Gastrocnemius medialis (tissue), 4 donors: ENCODE measurements at regions of chr9 and their contacts with region 1.

Region 1: DNA sequence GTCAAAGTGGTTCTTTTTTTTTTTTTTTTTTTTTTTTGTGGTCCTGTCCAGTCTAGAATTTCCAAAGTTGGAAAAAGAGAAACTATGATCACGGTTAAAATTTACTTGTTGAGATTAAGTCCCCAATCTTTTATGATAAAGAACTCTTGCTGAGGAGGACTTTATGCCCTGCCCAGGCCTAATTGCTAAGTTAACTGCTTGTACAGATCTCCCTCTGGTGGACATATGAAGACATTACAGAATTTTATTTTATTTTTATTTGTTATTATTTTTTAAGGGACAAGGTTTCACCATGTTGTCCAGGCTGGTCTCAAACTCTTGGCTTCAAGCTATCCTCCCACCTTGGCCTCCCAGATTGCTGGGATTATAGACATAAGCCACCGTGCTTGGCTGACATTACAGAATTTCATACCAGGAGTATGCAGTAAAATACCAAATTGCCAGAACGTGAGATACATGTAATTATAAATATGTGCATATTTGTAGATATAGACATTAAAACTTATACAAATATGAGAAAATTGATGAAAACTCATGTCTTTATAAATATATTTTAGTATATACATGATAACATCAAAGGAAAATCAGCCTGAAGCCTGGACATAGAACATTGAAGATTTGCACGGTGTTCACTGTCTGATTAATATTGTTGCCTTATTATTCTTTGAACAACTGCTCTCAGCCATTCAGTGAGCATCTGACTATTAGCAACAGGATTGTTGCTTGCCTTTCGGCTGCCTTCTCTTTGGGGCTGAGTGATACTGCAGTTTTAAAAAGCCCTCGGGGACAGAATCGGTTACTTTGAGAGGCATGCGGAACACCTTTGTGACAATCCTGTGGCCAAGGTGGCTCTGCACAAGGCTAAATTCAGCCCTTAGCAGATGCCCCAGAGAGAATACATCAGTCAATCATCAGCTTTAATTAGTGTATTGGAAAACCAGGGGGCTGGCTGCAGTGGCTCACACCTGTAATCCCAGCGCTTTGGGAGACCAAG is 91.0 kb downstream of the RFK start:
- DNase-seq: no peak
- ATAC-seq: no peak
- H3K4me3 ChIP-seq: no peak overlapping the region
- H3K27ac ChIP-seq: no peak overlapping the region
- H3K4me1 ChIP-seq: no peaks in the 10 kb centered on the region
- H3K27me3 ChIP-seq: no peaks in the 10 kb centered on the region
- CTCF ChIP-seq: peak; percentile 31 to 69 (median 59)
- POLR2A ChIP-seq: no peak

Region 2: DNA sequence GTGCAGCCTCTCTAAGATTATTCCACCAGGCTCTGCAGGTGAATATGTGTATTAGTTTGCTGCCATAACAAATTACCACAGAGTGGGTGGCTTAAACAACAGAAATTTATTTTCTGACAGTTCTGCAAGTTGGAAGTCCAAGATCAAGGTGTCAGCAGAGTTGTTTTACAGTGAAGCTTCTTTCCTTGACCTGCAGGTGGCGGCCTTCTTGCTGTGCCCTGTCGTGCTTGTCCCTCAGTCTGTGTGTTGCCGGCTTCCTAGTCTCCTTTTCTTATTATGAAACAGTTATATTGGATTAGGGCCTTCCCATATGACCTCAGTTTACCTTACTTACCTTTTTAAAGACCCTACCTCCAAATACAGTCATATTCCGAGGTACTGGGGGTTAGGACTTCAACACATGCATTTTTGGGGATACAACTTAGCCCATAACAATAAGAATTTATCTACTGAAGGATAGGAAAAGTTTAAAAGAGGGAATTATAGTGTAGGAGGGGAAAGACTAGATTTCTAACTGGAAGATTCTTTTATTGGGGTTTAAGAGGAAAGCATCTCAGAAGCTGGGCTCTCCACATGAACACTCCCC is 1117.6 kb before region 1 on chr9:
- in situ Hi-C with region 1: loop called in 2 of 4 experiments (anchors 10 to 25 kb)
- intact Hi-C with region 1: loop called (anchors 10 kb)
- DNase-seq: no peak
- ATAC-seq: no peak
- H3K4me3 ChIP-seq: no peak overlapping the region
- H3K27ac ChIP-seq: no peak overlapping the region
- H3K4me1 ChIP-seq: no peaks in the 10 kb centered on the region
- H3K27me3 ChIP-seq: no peaks in the 10 kb centered on the region
- CTCF ChIP-seq: peak in 2 of 5 experiments; percentile 20 to 39
- POLR2A ChIP-seq: no peak

Region 3: DNA sequence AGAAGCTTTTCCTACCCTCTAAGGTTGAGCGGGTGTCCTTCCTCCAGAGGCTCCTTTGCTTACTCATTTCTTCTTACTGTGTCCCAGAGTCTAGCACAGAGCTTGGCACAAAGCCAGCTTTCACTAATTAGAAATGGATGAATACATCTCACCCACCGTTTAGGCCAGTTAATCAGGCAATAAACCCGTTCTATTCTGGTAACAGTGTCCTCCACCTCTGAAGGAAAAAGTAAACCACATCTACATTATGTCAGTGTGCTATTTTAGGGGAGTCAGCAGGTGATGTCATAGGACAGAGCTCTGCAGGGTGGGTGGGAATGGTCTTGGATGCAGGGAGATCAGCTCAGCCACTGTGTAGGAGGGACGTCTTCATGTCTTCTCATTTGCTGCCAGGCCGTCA is 1105.7 kb before region 1 on chr9:
- in situ Hi-C with region 1: loop called in 2 of 4 experiments (anchors 10 to 25 kb)
- intact Hi-C with region 1: loop called (anchors 10 kb)
- DNase-seq: no peak
- ATAC-seq: no peak
- H3K4me3 ChIP-seq: no peak overlapping the region
- H3K27ac ChIP-seq: no peak overlapping the region
- H3K4me1 ChIP-seq: no peaks in the 10 kb centered on the region
- H3K27me3 ChIP-seq: no peaks in the 10 kb centered on the region
- CTCF ChIP-seq: no peak
- POLR2A ChIP-seq: no peak

Region 4: DNA sequence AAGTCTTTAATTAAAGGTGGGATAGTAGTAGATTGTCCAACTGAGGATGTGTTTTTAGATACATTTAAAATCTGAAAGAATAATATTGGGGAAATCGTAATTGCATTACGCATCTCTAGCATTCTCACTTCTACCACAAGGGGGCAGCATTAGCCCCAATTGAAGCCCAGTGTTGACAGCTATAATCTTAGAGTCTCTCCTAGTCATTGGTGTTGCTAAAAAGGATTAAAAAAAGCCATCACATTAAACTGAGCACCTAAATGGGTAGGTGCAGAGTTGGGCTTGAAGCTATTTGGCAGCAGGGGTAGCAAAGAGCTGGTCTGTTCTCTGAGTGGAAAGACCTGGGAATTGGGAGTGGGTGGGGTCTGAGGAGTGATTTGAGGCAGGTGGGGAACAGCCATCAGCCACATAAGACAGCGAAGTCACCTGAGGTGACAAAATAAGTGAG is 1037.7 kb before region 1 on chr9:
- in situ Hi-C with region 1: no loop called
- intact Hi-C with region 1: loop called (anchors 5 kb)
- DNase-seq: no peak
- ATAC-seq: no peak
- H3K4me3 ChIP-seq: no peak overlapping the region
- H3K27ac ChIP-seq: no peak overlapping the region
- H3K4me1 ChIP-seq: peaks cover 0 to 4% of the 10 kb centered on the region in 2 donors
- H3K27me3 ChIP-seq: no peaks in the 10 kb centered on the region
- CTCF ChIP-seq: peak; percentile 41 to 79 (median 63)
- POLR2A ChIP-seq: no peak

Region 5: DNA sequence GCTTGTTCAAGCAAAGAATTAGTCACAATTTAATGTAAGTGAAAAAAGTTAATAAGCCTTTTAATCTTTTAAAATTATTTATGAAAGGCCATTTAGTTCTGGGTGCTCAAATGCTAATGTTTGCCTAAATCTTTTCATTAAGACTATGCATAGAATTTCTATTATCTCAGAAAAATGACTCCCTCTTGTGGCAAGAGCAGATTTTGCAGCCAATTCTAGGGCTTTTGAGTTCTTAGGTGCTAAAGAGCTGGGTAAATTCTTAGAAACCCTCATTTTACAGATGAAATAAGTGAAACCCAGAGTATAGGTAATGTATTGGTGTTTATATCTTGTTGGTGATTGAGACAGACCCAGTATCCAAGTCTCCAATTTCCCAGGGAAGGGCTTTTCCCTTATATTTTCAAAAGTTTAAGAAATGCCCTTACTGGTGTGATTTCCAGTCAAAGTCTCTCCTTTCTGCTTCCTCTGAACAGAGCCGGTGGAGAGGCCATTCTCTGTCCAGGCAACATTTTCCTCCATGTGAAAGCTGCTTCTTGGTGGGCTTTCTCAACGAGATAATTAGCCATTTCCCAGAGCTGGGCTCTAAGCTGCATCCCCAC is 436.9 kb before region 1 on chr9:
- in situ Hi-C with region 1: no loop called
- intact Hi-C with region 1: loop called (anchors 10 kb)
- DNase-seq: no peak
- ATAC-seq: no peak
- H3K4me3 ChIP-seq: no peak overlapping the region
- H3K27ac ChIP-seq: no peak overlapping the region
- H3K4me1 ChIP-seq: no peaks in the 10 kb centered on the region
- H3K27me3 ChIP-seq: no peaks in the 10 kb centered on the region
- CTCF ChIP-seq: peak in 4 of 5 experiments; percentile 23 to 72 (median 52)
- POLR2A ChIP-seq: no peak

Region 6: GRCh38 chr9:75979146-75979761 is 324.0 kb before region 1 on chr9:
- in situ Hi-C with region 1: no loop called
- intact Hi-C with region 1: no loop called
- DNase-seq: no peak
- ATAC-seq: no peak
- H3K4me3 ChIP-seq: no peak overlapping the region
- H3K27ac ChIP-seq: no peak overlapping the region
- H3K4me1 ChIP-seq: no peaks in the 10 kb centered on the region
- H3K27me3 ChIP-seq: no peaks in the 10 kb centered on the region
- CTCF ChIP-seq: no peak
- POLR2A ChIP-seq: no peak

Region 7: GRCh38 chr9:76086539-76086938 is 216.7 kb before region 1 on chr9:
- in situ Hi-C with region 1: no loop called
- intact Hi-C with region 1: loop called (anchors 10 kb)
- DNase-seq: no peak
- ATAC-seq: no peak
- H3K4me3 ChIP-seq: no peak overlapping the region
- H3K27ac ChIP-seq: no peak overlapping the region
- H3K4me1 ChIP-seq: peaks cover 0 to 23% of the 10 kb centered on the region in 2 donors
- H3K27me3 ChIP-seq: no peaks in the 10 kb centered on the region
- CTCF ChIP-seq: no peak
- POLR2A ChIP-seq: no peak

Region 8: GRCh38 chr9:76216161-76216649 is 87.0 kb before region 1 on chr9:
- in situ Hi-C with region 1: no loop called
- intact Hi-C with region 1: no loop called
- DNase-seq: no peak
- ATAC-seq: no peak
- H3K4me3 ChIP-seq: no peak overlapping the region
- H3K27ac ChIP-seq: no peak overlapping the region
- H3K4me1 ChIP-seq: no peaks in the 10 kb centered on the region
- H3K27me3 ChIP-seq: no peaks in the 10 kb centered on the region
- CTCF ChIP-seq: no peak
- POLR2A ChIP-seq: no peak

Region 9: DNA sequence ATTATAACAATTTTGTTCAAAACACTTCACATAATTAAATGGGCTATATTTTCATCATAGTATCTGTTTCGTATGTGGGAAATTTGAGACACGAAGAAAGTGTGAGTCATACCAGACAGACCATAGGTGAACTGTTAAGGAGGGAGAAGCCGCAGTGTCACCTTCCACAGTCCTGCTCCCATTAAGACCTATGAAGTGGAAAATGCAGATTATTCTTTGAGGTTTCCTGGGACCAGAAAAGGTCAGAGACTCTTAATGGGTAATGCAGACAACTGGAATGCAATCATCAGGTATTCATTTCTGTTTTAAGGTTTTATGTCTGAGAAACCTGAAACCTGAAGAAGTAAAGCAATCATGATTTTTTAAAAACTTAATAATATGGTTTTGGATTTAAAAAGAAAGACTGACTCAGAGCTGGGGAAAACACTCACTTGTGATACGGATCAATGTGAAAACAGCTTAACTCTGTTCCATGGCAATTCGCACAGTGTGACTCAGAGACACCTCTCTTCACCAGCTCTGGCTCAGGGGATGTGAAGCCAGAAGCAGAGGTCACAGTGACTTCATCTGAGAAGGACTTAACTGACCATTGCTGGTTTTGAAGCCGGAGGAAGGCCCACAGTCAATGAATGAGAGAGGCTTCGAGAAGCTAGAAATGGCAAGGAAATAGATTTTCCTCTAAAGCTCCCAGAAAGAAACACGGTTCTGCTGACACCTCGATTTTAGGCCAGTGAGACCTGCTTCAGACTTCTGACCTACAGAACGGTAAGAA is 138.5 kb after region 1 on chr9:
- in situ Hi-C with region 1: no loop called
- intact Hi-C with region 1: no loop called
- DNase-seq: no peak
- ATAC-seq: no peak
- H3K4me3 ChIP-seq: no peak overlapping the region
- H3K27ac ChIP-seq: no peak overlapping the region
- H3K4me1 ChIP-seq: no peaks in the 10 kb centered on the region
- H3K27me3 ChIP-seq: no peaks in the 10 kb centered on the region
- CTCF ChIP-seq: no peak
- POLR2A ChIP-seq: no peak